Activated CD4-positive, alpha-beta T cell treated with anti-CD3 and anti-CD28 coated beads for 36 hours (primary cell): ENCODE measurements at regions of chr9 and their contacts with region 1.

Region 1: GRCh38 chr9:75088260-75088905 is at the start of gene OSTF1:
- DNase-seq: peak; percentile 97
- ATAC-seq: peak; percentile 90
- H3K4me3 Mint-ChIP-seq: peak within 1 kb of the TSS; percentile 96
- H3K27ac Mint-ChIP-seq: peak within 1 kb of the TSS; percentile 97
- H3K4me1 Mint-ChIP-seq: peaks cover 64% of the 10 kb centered on the region
- H3K27me3 Mint-ChIP-seq: no peaks in the 10 kb centered on the region
- total RNA-seq, gene OSTF1: 72.6 to 85.5 TPM

Region 2: DNA sequence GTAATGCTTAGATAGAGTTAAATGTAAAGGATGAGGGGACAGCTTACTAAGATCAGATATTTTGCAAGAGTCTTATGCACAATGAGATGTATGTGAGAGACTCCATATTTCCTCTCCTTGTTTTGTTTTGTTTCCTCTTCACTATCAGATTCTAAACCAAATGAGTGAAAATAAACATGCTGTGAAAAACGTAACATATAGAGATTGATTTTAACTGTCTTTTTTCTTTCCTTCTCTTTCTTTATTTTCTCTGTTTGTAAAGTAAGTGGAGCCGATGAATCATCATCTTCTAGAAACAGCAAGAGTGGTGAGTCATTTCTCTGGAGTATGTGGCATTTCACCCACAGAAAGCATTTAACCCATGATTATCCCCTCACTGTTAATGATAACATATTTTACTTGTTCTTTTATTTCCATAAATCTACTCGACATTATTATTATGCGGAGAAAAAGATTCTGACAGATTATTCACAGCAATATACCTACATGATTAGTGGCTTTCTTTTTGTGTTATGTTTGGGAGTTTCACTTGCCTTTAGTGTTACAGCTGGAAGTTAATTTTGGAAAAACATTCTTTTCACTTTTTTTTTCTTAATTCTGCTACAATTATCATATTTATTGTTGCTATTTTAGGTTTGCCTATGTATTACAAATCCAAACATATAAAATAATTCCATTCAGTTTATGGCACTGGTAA is 1938.9 kb before region 1 on chr9:
- CTCF ChIA-PET with region 1: no interaction called
- POLR2A ChIA-PET with region 1: no interaction called
- intact Hi-C with region 1: loop called in 1 of 2 experiments (anchors 5 kb)
- DNase-seq: no peak
- ATAC-seq: peak; percentile 65
- H3K4me3 Mint-ChIP-seq: peak overlapping the region; percentile 64
- H3K27ac Mint-ChIP-seq: peak overlapping the region; percentile 81
- H3K4me1 Mint-ChIP-seq: peaks cover 61% of the 10 kb centered on the region
- H3K27me3 Mint-ChIP-seq: no peaks in the 10 kb centered on the region

Region 3: GRCh38 chr9:75027187-75028107 is 60.9 kb before region 1 on chr9:
- CTCF ChIA-PET with region 1: interaction called, 9 read pairs
- POLR2A ChIA-PET with region 1: interaction called, 22 read pairs
- intact Hi-C with region 1: loop called (anchors 1 kb)
- DNase-seq: peak; percentile 72
- ATAC-seq: peak; percentile 34
- H3K4me3 Mint-ChIP-seq: peak overlapping the region; percentile 98
- H3K27ac Mint-ChIP-seq: peak overlapping the region; percentile 99
- H3K4me1 Mint-ChIP-seq: peaks cover 33% of the 10 kb centered on the region
- H3K27me3 Mint-ChIP-seq: no peaks in the 10 kb centered on the region

Region 4: DNA sequence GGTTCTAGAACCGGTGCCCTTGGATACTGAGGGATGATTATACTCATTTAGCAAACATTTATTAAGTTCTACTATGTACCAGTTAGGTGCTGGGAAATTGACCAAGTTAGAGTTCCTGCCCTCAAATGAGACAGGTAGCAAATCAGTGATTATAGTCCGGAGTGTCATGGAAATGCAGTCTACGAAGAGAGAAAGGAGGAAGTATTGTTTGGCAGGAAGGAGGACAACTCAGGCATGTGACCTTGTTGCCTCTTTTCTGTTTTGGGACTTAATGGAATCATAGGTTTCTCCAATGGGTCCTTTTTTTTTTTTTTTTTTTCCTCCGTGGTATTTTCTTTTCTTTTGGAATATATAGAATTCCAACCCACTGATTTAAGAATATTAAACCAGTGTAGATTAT is 27.9 kb after region 1 on chr9:
- CTCF ChIA-PET with region 1: interaction called, 3 read pairs
- POLR2A ChIA-PET with region 1: interaction called, 5 read pairs
- intact Hi-C with region 1: loop called in 1 of 2 experiments (anchors 2 kb)
- DNase-seq: no peak
- ATAC-seq: no peak
- H3K4me3 Mint-ChIP-seq: no peak overlapping the region
- H3K27ac Mint-ChIP-seq: no peak overlapping the region
- H3K4me1 Mint-ChIP-seq: peaks cover 66% of the 10 kb centered on the region
- H3K27me3 Mint-ChIP-seq: no peaks in the 10 kb centered on the region

Region 5: GRCh38 chr9:75148561-75148960 is 60.2 kb after region 1 on chr9:
- CTCF ChIA-PET with region 1: interaction called, 5 read pairs
- POLR2A ChIA-PET with region 1: interaction called, 7 read pairs
- intact Hi-C with region 1: loop called (anchors 1 kb)
- DNase-seq: peak; percentile 28
- ATAC-seq: peak; percentile 58
- H3K4me3 Mint-ChIP-seq: no peak overlapping the region
- H3K27ac Mint-ChIP-seq: peak overlapping the region; percentile 89
- H3K4me1 Mint-ChIP-seq: peaks cover 71% of the 10 kb centered on the region
- H3K27me3 Mint-ChIP-seq: no peaks in the 10 kb centered on the region

Region 6: GRCh38 chr9:75238311-75238978 is 150.1 kb after region 1 on chr9:
- CTCF ChIA-PET with region 1: interaction called, 3 read pairs
- POLR2A ChIA-PET with region 1: no interaction called
- intact Hi-C with region 1: loop called in 1 of 2 experiments (anchors 5 kb)
- DNase-seq: peak; percentile 63
- ATAC-seq: peak; percentile 99
- H3K4me3 Mint-ChIP-seq: no peak overlapping the region
- H3K27ac Mint-ChIP-seq: no peak overlapping the region
- H3K4me1 Mint-ChIP-seq: no peaks in the 10 kb centered on the region
- H3K27me3 Mint-ChIP-seq: no peaks in the 10 kb centered on the region

Region 7: GRCh38 chr9:76393963-76394679 is 1305.7 kb after region 1 on chr9 and contains the start of gene RFK:
- CTCF ChIA-PET with region 1: no interaction called
- POLR2A ChIA-PET with region 1: interaction called, 3 read pairs
- intact Hi-C with region 1: loop called (anchors 1 to 10 kb)
- DNase-seq: peak; percentile 96
- ATAC-seq: peak; percentile 89
- H3K4me3 Mint-ChIP-seq: peak within 1 kb of the TSS; percentile 85
- H3K27ac Mint-ChIP-seq: peak within 1 kb of the TSS; percentile 95
- H3K4me1 Mint-ChIP-seq: peaks cover 26% of the 10 kb centered on the region
- H3K27me3 Mint-ChIP-seq: no peaks in the 10 kb centered on the region
- total RNA-seq, gene RFK: 7.0 to 8.3 TPM